Left colon (tissue), 2 donors: ENCODE measurements at regions of chr7 and their contacts with region 1.

Region 1: DNA sequence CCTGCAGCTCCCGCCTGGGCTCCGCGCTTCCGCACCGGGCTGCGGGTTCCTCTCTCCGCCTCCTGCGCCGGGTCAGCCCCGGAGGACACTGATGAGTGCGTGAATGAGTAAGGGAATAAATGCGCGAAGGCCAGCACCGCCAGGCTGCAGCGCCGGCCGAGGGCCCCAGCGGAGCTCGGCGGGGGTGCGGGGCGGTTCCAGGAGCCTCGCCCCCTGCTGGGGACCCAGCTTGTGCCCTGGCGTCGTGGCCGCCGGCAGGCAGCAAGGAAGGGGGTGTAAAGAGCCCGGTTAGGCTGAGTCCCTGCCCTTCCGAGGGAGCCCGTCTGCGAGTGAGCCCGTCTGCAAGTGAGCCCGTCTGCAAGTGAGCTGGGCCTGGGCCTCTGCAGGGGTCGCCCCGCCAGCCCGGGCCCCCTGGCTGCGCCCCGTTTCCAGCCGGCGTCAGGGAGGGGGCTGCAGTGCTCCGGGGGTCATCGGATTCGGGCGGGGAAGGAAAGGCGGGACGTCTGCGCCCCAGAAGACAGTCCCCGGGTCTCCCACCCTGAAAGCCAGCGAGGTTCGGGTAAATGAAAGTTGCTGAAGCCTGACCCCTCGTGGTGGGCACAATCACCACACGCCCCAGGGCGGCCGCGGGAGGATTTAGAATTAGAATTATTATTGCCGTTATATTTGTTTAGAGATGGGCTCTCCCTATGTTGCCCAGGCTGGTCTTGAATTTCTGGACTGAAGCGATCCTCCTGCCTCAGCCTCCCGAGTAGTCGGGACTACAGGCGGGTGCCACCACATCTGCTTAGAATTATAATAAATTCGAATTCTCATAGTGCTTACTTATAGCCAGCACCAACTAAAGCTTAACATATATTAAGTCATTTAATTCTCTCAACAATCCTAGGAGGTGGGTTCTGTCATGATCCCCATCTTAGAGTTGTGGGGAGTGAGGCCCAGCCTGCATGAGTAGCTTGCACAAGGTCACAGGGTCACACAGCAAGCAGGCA is 8.6 kb upstream of the CRYGN start:
- DNase-seq: peak in 1 of 2 donors; percentile 76
- ATAC-seq: peak; percentile 91

Region 2: GRCh38 chr7:151368136-151368571 is 80.4 kb before region 1 on chr7:
- intact Hi-C with region 1: loop called in 1 of 2 experiments (anchors 2 kb)
- DNase-seq: peak; percentile 80 to 89
- ATAC-seq: peak; percentile 98

Region 3: DNA sequence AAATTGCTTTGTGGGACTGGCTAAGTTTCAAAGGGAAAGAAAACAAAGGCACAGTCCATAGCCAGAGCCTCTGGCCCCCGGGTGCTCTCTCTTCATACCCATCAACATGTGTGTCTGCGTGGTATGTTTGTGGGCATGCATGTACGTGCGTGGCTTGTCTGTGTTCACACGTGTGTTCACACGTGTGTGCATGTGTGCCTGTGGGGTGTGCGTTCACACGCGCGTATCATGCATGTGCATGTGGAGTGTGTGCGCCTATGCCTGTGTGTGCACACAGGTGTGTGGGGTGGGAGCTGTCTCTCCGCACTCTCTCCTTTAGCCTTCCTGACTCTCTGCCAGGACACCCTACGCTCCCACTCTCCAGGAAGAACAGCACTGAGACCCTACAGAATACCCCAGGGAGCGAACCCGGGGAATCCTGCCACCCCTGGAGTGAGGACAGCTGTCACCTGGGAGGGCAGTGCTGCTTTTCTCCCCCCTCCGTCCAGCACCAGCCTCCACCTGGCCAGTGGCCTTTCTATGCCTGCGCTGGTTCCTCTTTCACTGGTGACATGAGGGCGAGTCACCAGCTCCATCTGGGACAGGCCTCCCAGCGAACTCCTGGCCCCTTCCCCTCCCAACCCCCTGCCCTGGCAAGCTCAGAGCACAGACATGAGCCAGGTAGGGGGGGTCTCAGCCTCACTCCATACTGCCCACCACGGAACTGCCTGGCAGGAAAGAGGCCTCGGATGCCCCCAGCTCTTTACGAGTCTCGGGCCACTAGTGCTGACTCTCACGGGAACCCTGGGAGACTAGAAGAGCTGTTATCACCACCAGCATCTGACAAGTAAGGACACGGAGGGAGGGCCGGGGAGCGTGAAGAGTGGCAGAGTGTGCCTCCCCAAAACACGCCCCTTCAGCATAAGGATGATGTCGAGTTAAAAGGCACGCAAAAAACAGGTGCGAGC is 55.3 kb before region 1 on chr7:
- intact Hi-C with region 1: no loop called
- DNase-seq: no peak
- ATAC-seq: no peak

Region 4: GRCh38 chr7:151782598-151783448 is 334.3 kb after region 1 on chr7:
- intact Hi-C with region 1: no loop called
- DNase-seq: peak; percentile 51 to 73
- ATAC-seq: peak; percentile 74